Activated CD8-positive, alpha-beta T cell treated with anti-CD3 and anti-CD28 coated beads, Interleukin-2, amount 10 ng/mL, durations not matched to agents 7 days and 5 days (primary cell): ENCODE measurements at regions of chr5 and their contacts with region 1.

Region 1: GRCh38 chr5:181223058-181223728 is at the start of gene TRIM41:
- DNase-seq: peak; percentile 99
- ATAC-seq: peak; percentile 65
- H3K4me3 Mint-ChIP-seq: peak within 1 kb of the TSS; percentile 99
- H3K27ac Mint-ChIP-seq: peak within 1 kb of the TSS; percentile 99
- H3K4me1 Mint-ChIP-seq: peaks cover 68% of the 10 kb centered on the region
- H3K27me3 Mint-ChIP-seq: peaks cover 1% of the 10 kb centered on the region
- total RNA-seq, gene TRIM41: 40.0 to 44.7 TPM

Region 2: DNA sequence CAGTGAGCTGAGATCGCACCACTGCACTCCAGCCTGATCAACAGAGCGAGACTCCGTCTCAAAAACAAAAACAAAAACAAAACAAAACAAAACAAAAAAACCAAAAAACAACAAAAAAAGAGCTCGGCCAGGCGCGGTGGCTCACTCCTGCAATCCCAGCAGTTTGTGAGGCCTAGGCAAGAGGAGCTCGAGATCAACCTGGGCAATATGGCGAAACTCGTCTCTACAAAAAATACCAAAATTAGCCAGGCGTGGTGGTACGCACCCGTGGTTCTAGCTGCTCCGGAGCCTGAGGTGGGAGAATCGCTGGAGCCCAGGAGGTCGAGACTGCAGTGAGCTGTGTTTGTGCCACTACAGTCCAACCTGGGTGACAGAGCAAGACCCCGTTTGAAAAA is 38.3 kb before region 1 on chr5:
- CTCF ChIA-PET with region 1: interaction called, 7 read pairs
- POLR2A ChIA-PET with region 1: interaction called, 16 read pairs
- DNase-seq: no peak
- ATAC-seq: no peak
- H3K4me3 Mint-ChIP-seq: peak overlapping the region; percentile 84
- H3K27ac Mint-ChIP-seq: peak overlapping the region; percentile 90
- H3K4me1 Mint-ChIP-seq: peaks cover 49% of the 10 kb centered on the region
- H3K27me3 Mint-ChIP-seq: no peaks in the 10 kb centered on the region

Region 3: DNA sequence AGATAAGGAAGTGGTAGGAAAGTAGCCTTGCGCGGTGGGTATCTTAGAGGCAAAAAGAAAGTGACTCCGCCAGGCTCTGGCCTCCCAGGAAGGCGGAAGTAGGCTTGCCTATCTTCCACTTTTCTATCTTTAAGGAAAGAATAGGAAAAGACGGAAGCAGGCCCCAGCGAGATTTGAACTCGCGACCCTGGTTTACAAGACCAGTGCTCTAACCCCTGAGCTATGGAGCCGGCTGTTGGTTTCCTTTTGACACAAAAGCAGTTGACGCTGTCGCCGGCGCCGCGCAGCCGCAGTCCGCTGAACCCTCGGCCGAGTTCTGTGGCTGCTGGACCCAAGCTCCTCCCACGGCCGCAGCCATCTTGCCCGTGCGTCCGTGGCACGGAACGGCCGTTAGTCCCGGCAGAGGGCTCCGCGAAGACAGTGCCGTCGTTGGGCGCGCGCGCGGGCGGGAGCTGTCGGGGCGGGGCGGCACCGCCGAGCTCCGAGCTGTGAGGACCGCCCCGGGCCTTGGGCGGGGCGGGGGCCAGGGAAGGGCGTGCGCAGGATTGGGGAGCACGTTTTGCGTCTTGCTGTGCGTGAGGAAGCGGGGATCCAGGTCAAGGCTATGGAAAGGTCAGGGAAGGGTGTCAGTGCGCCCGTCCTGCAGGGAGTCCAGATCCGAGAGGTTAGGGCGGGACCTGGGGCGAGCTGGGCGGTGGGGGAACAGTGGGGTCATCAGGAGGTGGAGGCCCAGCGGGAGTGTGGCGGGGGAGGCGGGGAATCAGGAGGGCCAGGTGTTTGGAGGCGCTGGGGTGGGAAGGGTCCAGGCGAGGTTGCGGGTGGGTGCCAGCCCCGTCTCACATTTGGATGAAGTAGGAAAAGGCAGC is 31.4 kb before region 1 on chr5:
- CTCF ChIA-PET with region 1: interaction called, 4 read pairs
- POLR2A ChIA-PET with region 1: interaction called, 22 read pairs
- DNase-seq: peak; percentile 95
- ATAC-seq: peak; percentile 68
- H3K4me3 Mint-ChIP-seq: peak overlapping the region; percentile 92
- H3K27ac Mint-ChIP-seq: peak overlapping the region; percentile 90
- H3K4me1 Mint-ChIP-seq: peaks cover 40% of the 10 kb centered on the region
- H3K27me3 Mint-ChIP-seq: no peaks in the 10 kb centered on the region

Region 4: GRCh38 chr5:181207214-181208107 is 15.7 kb before region 1 on chr5:
- CTCF ChIA-PET with region 1: interaction called, 7 read pairs
- POLR2A ChIA-PET with region 1: interaction called, 25 read pairs
- DNase-seq: peak; percentile 89
- ATAC-seq: peak; percentile 68
- H3K4me3 Mint-ChIP-seq: peak overlapping the region; percentile 78
- H3K27ac Mint-ChIP-seq: peak overlapping the region; percentile 86
- H3K4me1 Mint-ChIP-seq: peaks cover 40% of the 10 kb centered on the region
- H3K27me3 Mint-ChIP-seq: peaks cover 23% of the 10 kb centered on the region

Region 5: DNA sequence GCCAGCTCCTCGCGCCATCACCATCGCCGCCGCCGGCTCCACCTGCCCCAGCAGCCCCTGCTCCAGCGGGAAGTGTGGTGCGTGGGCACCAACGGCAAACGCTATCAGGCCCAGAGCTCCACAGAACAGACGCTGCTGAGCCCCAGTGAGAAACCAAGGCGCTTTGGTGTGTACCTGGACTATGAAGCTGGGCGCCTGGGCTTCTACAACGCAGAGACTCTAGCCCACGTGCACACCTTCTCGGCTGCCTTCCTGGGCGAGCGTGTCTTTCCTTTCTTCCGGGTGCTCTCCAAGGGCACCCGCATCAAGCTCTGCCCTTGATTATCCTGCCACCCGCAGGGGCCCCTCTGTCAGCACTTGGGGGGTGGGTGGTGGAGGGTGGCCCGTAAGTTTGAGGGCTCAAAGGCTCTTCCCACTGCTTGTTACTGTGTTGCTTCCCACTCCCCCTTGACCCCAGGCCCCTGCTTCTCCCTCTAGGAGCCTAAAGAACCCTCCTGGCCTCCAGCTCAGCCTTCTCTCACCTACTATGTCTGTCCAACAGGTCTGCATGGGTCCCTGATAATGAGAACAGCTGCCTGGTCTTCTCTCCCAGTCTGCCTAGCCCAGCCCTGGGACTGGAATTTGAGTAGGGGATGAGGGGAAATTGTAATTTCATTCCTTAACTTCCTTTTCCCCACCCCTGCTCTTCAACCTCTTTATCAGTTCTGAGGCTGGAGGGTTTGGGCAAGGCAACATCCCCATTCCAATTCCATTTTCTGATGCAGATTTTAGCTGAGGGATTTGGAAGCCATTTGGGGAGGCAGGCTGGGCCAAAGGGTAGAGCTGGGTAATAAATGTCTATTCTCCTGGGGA is 11.5 kb after region 1 on chr5:
- CTCF ChIA-PET with region 1: interaction called, 4 read pairs
- POLR2A ChIA-PET with region 1: interaction called, 157 read pairs
- DNase-seq: no peak
- ATAC-seq: peak; percentile 6
- H3K4me3 Mint-ChIP-seq: no peak overlapping the region
- H3K27ac Mint-ChIP-seq: no peak overlapping the region
- H3K4me1 Mint-ChIP-seq: peaks cover 27% of the 10 kb centered on the region
- H3K27me3 Mint-ChIP-seq: no peaks in the 10 kb centered on the region

Region 6: DNA sequence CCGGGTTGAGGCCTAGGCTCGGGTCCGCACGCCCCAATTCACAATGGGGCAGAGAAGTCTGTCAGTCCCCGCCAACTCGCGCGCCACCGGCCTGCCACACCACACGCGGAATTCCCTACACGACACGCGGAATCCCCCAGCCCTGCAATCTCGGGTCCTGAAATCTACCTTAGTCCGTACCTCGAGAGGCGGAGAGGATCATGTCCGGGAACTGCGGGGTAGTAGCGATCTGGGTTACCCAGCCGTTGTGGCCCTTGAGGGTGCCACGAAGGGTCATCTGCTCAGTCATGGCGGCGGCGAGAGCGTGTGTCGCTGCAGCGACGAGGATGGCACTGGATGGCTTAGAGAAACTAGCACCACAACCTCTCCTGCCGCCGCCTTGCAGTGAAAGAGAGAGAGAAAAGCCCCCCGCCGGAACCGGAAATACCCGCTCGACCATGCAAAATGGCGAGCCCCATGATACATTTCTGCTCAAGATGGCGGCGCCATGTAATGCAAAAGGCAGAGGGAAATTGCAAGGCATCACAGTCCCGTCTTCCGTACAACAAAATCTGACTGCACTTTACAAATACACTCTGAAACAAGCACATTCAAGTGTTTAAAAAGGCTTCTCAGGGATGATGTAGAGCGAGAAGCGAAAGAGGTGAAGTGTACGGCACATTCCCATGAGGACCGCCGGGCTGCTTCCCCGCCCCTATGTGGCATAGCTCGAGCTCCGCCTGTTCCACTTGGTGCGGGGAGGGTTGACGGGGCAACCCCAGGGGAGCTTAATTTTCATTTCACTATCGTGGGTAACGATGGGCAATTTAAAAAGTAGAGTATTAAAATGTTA is 20.5 kb after region 1 on chr5 and contains the start of gene RACK1:
- CTCF ChIA-PET with region 1: interaction called, 8 read pairs
- POLR2A ChIA-PET with region 1: interaction called, 157 read pairs
- DNase-seq: peak; percentile 94
- ATAC-seq: peak; percentile 72
- H3K4me3 Mint-ChIP-seq: peak within 1 kb of the TSS; percentile 98
- H3K27ac Mint-ChIP-seq: peak within 1 kb of the TSS; percentile 99
- H3K4me1 Mint-ChIP-seq: peaks cover 63% of the 10 kb centered on the region
- H3K27me3 Mint-ChIP-seq: no peaks in the 10 kb centered on the region
- total RNA-seq, gene RACK1: 1,796 to 1,942 TPM

Region 7: GRCh38 chr5:181260387-181261319 is 37.5 kb after region 1 on chr5 and contains the start of gene TRIM52:
- CTCF ChIA-PET with region 1: interaction called, 3 read pairs
- POLR2A ChIA-PET with region 1: interaction called, 30 read pairs
- DNase-seq: peak; percentile 94
- ATAC-seq: peak; percentile 87
- H3K4me3 Mint-ChIP-seq: peak within 1 kb of the TSS; percentile 93
- H3K27ac Mint-ChIP-seq: peak within 1 kb of the TSS; percentile 96
- H3K4me1 Mint-ChIP-seq: peaks cover 35% of the 10 kb centered on the region
- H3K27me3 Mint-ChIP-seq: no peaks in the 10 kb centered on the region
- total RNA-seq, gene TRIM52: 22.4 to 23.2 TPM